Aorta (tissue), 5 donors: ENCODE measurements at regions of chr11 and their contacts with region 1.

Region 1: GRCh38 chr11:102495161-102496042 is 35.1 kb downstream of the MMP7 start:
- DNase-seq: no peak
- ATAC-seq: peak; percentile 87
- H3K4me3 ChIP-seq: no peak overlapping the region
- H3K27ac ChIP-seq: no peak overlapping the region
- H3K4me1 ChIP-seq: no peaks in the 10 kb centered on the region
- H3K27me3 ChIP-seq: no peaks in the 10 kb centered on the region

Region 2: GRCh38 chr11:102287964-102288724 is 207.3 kb before region 1 on chr11:
- intact Hi-C with region 1: loop called (anchors 5 kb)
- DNase-seq: peak in 1 of 2 donors; percentile 51
- ATAC-seq: peak; percentile 85
- H3K4me3 ChIP-seq: no peak overlapping the region
- H3K27ac ChIP-seq: peak overlapping the region in 1 of 2 donors; percentile 38
- H3K4me1 ChIP-seq: peaks cover 2 to 3% of the 10 kb centered on the region in 2 donors
- H3K27me3 ChIP-seq: no peaks in the 10 kb centered on the region

Region 3: DNA sequence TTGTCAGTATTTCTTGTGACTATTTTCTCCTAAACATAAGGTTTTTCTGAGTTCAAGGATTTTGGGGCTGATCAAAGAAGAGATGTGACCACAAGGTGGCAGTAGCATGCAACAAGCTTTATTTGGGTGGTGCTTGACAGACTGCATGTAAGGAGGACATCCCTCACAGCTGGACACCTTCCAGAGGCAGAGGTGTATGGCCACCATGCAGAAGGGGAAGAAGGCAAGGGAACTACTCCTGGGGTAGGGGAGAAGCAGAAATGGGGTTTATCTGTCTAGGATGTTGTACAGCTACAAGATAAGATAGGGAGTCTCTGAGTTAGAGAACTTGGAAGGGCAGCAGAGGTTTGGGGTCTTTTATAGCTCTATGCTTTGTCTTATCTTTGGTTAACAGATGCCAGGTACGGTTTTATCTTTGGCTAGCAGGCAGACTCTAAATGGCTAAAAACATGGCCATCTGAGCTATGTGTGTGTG is 153.5 kb before region 1 on chr11:
- intact Hi-C with region 1: loop called (anchors 5 to 10 kb)
- DNase-seq: peak; percentile 63 to 72
- ATAC-seq: peak; percentile 75
- H3K4me3 ChIP-seq: no peak overlapping the region
- H3K27ac ChIP-seq: no peak overlapping the region
- H3K4me1 ChIP-seq: peaks cover 0 to 2% of the 10 kb centered on the region in 2 donors
- H3K27me3 ChIP-seq: no peaks in the 10 kb centered on the region

Region 4: DNA sequence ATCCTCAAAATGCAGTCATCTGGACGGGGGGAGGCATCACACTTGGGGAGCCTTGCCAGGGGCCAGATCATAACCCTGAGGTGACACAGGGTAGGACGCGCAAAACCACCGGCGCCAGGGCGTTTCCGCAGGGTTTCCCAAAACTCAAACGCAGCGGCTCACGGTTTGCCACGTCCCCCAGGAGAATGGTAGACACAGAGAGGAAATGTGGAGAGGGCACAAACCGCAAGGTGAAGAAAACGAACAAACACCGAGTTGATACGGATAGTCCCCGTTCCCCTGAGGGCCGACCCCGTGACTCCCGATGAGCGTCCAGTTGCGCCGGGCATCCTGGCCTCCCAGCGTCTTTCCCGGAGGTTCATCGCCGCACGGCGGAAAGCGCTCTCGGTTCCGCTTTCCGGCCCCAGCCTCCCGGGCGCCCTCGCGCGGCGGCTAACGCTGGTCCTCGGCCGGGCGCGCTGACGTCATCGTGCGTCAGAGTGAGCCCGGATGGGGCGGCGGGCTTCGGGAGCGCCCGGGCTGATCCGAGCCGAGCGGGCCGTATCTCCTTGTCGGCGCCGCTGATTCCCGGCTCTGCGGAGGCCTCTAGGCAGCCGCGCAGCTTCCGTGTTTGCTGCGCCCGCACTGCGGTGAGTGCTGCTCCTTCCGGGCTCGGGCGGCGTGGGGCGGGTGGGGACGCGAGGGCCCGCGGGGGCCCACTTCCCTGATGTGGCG is 148.5 kb before region 1 on chr11 and contains the start of gene BIRC2:
- intact Hi-C with region 1: loop called (anchors 5 to 10 kb)
- DNase-seq: peak; percentile 96 to 99
- ATAC-seq: peak; percentile 99
- H3K4me3 ChIP-seq: peak within 1 kb of the TSS; percentile 97 to 100
- H3K27ac ChIP-seq: peak within 1 kb of the TSS; percentile 82 to 97
- H3K4me1 ChIP-seq: peaks cover 0 to 2% of the 10 kb centered on the region in 2 donors
- H3K27me3 ChIP-seq: no peaks in the 10 kb centered on the region
- total RNA-seq, gene BIRC2: 41.1 to 51.2 TPM

Region 5: GRCh38 chr11:102390667-102391465 is 104.5 kb before region 1 on chr11:
- intact Hi-C with region 1: loop called (anchors 2 to 5 kb)
- DNase-seq: peak; percentile 74 to 78
- ATAC-seq: peak; percentile 75
- H3K4me3 ChIP-seq: no peak overlapping the region
- H3K27ac ChIP-seq: no peak overlapping the region
- H3K4me1 ChIP-seq: no peaks in the 10 kb centered on the region
- H3K27me3 ChIP-seq: no peaks in the 10 kb centered on the region

Region 6: DNA sequence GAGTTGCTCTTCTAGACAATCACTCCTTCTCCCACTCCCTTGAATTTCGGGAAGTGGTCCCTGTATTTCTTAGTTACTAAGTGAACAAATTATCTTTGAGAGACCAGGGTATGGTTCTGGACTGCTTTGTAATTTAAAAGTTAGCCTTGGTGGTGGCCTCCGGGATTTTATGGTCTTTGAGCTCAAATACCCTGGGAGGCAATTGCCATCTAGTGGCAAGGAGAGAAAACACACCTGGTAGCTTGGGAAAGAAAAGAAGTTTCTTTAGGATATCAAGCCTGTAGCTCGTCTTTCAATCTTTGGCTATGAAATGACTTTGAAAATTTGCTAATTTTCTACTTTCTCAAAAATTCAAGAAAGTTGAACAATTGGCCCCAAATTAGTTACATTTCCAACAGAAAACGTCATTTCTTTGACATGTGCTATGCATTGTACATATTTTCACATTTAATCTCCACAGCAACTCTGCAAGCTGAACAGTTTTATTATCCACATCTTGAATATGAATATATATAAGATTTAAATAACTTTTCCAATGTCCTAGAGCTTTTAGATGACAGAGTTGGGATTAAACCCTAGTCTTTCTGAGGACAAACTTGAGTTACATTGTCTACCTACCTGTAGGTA is 171.0 kb after region 1 on chr11:
- intact Hi-C with region 1: loop called in 1 of 2 experiments (anchors 2 kb)
- DNase-seq: no peak
- ATAC-seq: no peak
- H3K4me3 ChIP-seq: no peak overlapping the region
- H3K27ac ChIP-seq: no peak overlapping the region
- H3K4me1 ChIP-seq: no peaks in the 10 kb centered on the region
- H3K27me3 ChIP-seq: no peaks in the 10 kb centered on the region